BJ (cell line): ENCODE measurements at regions of chr10 and their contacts with region 1.

Region 1: GRCh38 chr10:50381642-50382041 is 130.3 kb upstream of the ASAH2 start:
- DNase-seq: no peak
- H3K4me3 ChIP-seq: no peak overlapping the region
- H3K27me3 ChIP-seq: no peaks in the 10 kb centered on the region
- CTCF ChIP-seq: no peak

Region 2: GRCh38 chr10:50291261-50291850 is 90.3 kb before region 1 on chr10:
- CTCF ChIA-PET with region 1: no interaction called
- POLR2A ChIA-PET with region 1: no interaction called
- DNase-seq: no peak
- H3K4me3 ChIP-seq: no peak overlapping the region
- H3K27me3 ChIP-seq: no peaks in the 10 kb centered on the region; the same call in 1 of the 2 replicates
- CTCF ChIP-seq: peak; percentile 54

Region 3: DNA sequence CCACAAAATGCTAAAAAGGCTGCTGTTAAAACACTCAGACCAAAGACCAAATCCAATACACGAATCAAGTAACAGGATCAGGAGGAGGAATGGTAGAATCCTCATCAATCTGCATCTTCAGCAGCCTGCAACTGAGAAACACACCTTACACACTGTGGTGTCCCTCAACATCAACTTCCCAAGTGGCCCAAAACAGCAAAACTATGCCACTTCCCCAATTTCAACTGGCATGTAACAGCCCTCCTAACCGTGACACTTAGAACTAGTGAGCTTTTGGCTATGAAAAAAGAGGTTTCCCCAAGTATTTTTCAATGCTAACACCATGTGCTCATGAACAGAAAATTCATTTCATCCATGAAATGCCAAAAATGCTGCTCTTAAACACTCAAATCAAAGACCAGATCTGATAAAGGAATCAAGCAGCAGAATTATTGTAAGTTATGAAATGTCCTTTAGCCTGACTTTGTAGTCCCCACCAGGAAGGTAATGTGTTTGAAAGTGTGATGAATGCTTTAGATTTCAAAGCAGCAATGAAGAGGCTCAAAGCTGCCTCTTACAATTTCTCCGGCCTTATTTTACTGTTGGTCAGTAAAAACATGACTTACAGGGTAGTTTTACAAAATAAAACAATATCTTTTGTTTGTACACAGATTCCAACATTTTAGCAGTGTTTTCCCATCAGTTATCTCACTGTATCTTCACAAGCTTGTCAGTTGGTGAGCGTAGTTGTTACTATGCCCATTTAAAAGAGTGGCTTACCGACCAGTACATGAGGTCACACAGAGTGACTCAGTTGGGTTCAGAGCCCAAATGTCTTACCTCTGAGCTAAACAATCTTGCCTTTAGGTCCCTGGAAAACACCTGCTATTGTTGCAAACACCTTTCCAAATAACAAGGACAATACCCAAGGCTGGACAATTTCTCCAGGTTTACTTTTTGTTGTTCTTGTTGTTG is 64.7 kb before region 1 on chr10:
- CTCF ChIA-PET with region 1: no interaction called
- POLR2A ChIA-PET with region 1: no interaction called
- DNase-seq: no peak
- H3K4me3 ChIP-seq: no peak overlapping the region
- H3K27me3 ChIP-seq: no peaks in the 10 kb centered on the region
- CTCF ChIP-seq: no peak

Region 4: DNA sequence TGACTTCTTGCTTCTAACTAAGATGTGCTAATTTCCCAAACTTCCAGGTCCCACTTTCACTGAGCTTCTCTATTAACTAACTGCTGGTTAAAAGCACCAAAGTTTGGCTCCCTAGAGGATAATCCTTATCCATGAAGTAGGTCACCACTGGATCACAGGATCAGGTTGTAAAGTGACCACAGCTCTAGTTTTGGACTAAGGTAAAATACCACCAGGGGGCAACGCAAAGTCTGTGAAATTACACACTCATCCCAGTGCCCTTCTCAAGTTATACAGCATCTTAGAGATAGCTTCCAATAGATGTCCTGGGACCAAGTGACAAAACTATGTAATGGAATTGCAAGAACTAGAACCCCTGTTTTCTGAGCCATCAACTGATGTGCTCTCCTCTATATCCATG is 13.9 kb before region 1 on chr10:
- CTCF ChIA-PET with region 1: interaction called, 10 read pairs
- POLR2A ChIA-PET with region 1: no interaction called
- DNase-seq: no peak
- H3K4me3 ChIP-seq: no peak overlapping the region
- H3K27me3 ChIP-seq: no peaks in the 10 kb centered on the region
- CTCF ChIP-seq: peak; percentile 52